Naive thymus-derived CD4-positive, alpha-beta T cell (primary cell): ENCODE measurements at regions of chr9 and their contacts with region 1.

Region 1: GRCh38 chr9:96566498-96567207 is 53.0 kb downstream of the CDC14B start:
- DNase-seq: peak; percentile 64 to 81 (median 78)
- ATAC-seq: peak; percentile 92
- H3K4me3 ChIP-seq: peak overlapping the region; percentile 77
- H3K4me3 Mint-ChIP-seq: peak overlapping the region; percentile 83 to 95 (median 89)
- H3K27ac ChIP-seq: peak overlapping the region; percentile 89
- H3K27ac Mint-ChIP-seq: peak overlapping the region; percentile 52 to 91 (median 84)
- H3K4me1 ChIP-seq: peaks cover 8 to 16% of the 10 kb centered on the region in 2 donors
- H3K4me1 Mint-ChIP-seq: peaks cover 6 to 31% (median 29%) of the 10 kb centered on the region in 7 donors
- H3K27me3 ChIP-seq: no peaks in the 10 kb centered on the region
- H3K27me3 Mint-ChIP-seq: peaks cover 0 to 36% (median 3%) of the 10 kb centered on the region in 5 donors

Region 2: GRCh38 chr9:96449845-96450612 is 116.6 kb before region 1 on chr9 and contains the start of gene HABP4:
- CTCF ChIA-PET with region 1: interaction called, 3 read pairs
- POLR2A ChIA-PET with region 1: interaction called, 42 read pairs
- intact Hi-C with region 1: loop called (anchors 1 to 2 kb)
- DNase-seq: peak; percentile 90 to 97 (median 95)
- ATAC-seq: peak; percentile 98
- H3K4me3 ChIP-seq: peak within 1 kb of the TSS; percentile 77
- H3K4me3 Mint-ChIP-seq: peak within 1 kb of the TSS; percentile 88 to 99 (median 93)
- H3K27ac ChIP-seq: peak within 1 kb of the TSS; percentile 74
- H3K27ac Mint-ChIP-seq: peak within 1 kb of the TSS; percentile 74 to 98 (median 94)
- H3K4me1 ChIP-seq: peaks cover 5 to 14% of the 10 kb centered on the region in 2 donors
- H3K4me1 Mint-ChIP-seq: peaks cover 19 to 33% (median 26%) of the 10 kb centered on the region in 7 donors
- H3K27me3 ChIP-seq: no peaks in the 10 kb centered on the region
- H3K27me3 Mint-ChIP-seq: peaks cover 0 to 41% (median 6%) of the 10 kb centered on the region in 5 donors
- total RNA-seq, gene HABP4: 6.6 to 40.3 (median 23.9) TPM

Region 3: GRCh38 chr9:96491079-96491879 is 75.4 kb before region 1 on chr9:
- CTCF ChIA-PET with region 1: no interaction called
- POLR2A ChIA-PET with region 1: interaction called, 4 read pairs
- intact Hi-C with region 1: loop called in 1 of 2 experiments (anchors 2 kb)
- DNase-seq: peak in 1 of 9 donors; percentile 24
- ATAC-seq: peak; percentile 22
- H3K4me3 ChIP-seq: no peak overlapping the region
- H3K4me3 Mint-ChIP-seq: peak overlapping the region in 3 of 10 donors; percentile 32 to 67 (median 59)
- H3K27ac ChIP-seq: no peak overlapping the region
- H3K27ac Mint-ChIP-seq: peak overlapping the region in 8 of 9 donors; percentile 11 to 84 (median 67)
- H3K4me1 ChIP-seq: no peaks in the 10 kb centered on the region
- H3K4me1 Mint-ChIP-seq: peaks cover 0 to 13% (median 9%) of the 10 kb centered on the region in 7 donors
- H3K27me3 ChIP-seq: no peaks in the 10 kb centered on the region
- H3K27me3 Mint-ChIP-seq: no peaks in the 10 kb centered on the region

Region 4: GRCh38 chr9:96619491-96620154 is 53.0 kb after region 1 on chr9 and contains the start of gene CDC14B:
- CTCF ChIA-PET with region 1: no interaction called
- POLR2A ChIA-PET with region 1: interaction called, 4 read pairs
- intact Hi-C with region 1: loop called (anchors 2 kb)
- DNase-seq: peak; percentile 42 to 84 (median 62)
- ATAC-seq: peak; percentile 83
- H3K4me3 ChIP-seq: peak within 1 kb of the TSS; percentile 51
- H3K4me3 Mint-ChIP-seq: peak within 1 kb of the TSS; percentile 59 to 85 (median 78)
- H3K27ac ChIP-seq: no peak within 1 kb of the TSS
- H3K27ac Mint-ChIP-seq: peak within 1 kb of the TSS in 5 of 9 donors; percentile 17 to 71 (median 38)
- H3K4me1 ChIP-seq: peaks cover 0 to 8% of the 10 kb centered on the region in 2 donors
- H3K4me1 Mint-ChIP-seq: peaks cover 0 to 20% (median 5%) of the 10 kb centered on the region in 7 donors
- H3K27me3 ChIP-seq: peaks cover 2 to 4% of the 10 kb centered on the region in 2 donors
- H3K27me3 Mint-ChIP-seq: peaks cover 24 to 60% (median 52%) of the 10 kb centered on the region in 5 donors
- total RNA-seq, gene CDC14B: 0.41 to 16.5 (median 9.4) TPM

Region 5: DNA sequence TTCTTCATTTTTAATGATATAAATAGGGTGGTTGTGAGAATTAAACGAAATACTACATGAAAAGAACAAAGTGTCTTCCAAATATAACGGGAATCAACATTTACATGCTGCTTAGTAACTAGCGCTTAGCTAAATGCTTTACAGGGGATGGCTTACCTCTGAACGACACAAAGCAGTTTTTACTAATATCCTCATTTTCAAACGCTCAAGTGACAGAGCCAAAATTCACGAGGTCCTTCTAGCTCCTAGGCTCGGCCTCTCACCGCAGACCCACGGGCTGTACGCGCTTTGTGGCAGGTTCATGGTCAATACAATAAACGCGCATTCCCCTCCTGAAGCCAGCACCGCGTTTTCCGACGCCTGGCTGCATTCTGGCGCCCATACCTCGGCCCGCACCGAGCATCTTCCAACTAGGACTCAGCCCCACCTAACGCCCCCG is 210.8 kb after region 1 on chr9:
- CTCF ChIA-PET with region 1: no interaction called
- POLR2A ChIA-PET with region 1: no interaction called
- intact Hi-C with region 1: loop called in 1 of 2 experiments (anchors 2 kb)
- DNase-seq: peak in 5 of 9 donors; percentile 18 to 47 (median 29)
- ATAC-seq: peak; percentile 28
- H3K4me3 ChIP-seq: peak overlapping the region; percentile 84
- H3K4me3 Mint-ChIP-seq: peak overlapping the region; percentile 91 to 100 (median 98)
- H3K27ac ChIP-seq: peak overlapping the region; percentile 92
- H3K27ac Mint-ChIP-seq: peak overlapping the region; percentile 94 to 100 (median 98)
- H3K4me1 ChIP-seq: peaks cover 6 to 12% of the 10 kb centered on the region in 2 donors
- H3K4me1 Mint-ChIP-seq: peaks cover 12 to 64% (median 58%) of the 10 kb centered on the region in 7 donors
- H3K27me3 ChIP-seq: no peaks in the 10 kb centered on the region
- H3K27me3 Mint-ChIP-seq: no peaks in the 10 kb centered on the region